ENCODE measurements at regions of chr15 and their contacts with region 1.

Region 1: DNA sequence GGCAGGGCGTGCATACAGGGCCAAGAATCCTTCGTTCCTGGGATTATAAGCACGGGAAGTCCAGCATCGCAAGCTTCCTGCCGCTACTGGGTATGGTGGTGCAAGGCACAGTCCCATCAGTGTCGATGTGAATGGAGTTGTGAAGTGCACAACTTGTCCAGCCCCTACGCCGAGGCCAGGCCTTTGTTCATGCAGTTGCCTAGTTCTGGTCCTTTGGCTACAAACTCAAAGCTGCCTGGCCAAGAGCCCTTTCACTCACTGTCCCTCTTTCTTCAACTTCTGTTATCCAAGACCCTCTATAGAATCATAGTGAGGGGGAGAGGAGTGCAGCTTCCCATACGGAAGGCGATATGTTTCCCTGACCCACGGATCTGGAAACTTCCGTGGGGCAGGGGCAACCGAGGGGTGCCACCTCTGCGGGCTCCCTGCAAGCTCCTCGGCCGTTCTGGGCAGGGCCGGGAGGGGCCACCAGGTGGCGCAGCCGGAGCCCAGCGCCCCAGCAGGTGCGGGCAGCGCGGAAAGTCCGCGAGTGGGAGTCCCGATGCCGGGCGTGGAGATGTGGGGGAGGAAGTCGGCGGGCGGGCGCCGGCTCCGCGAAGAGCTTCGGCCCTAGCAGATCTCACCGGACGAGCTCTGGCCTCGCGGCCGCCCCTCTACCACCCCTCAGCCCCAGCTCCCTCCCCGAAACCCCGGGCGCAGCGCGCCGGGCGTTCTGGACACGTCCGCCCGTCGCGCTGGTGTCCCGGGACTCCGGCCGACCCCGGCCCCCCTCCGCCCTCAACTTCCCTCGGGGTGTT is 693 bp downstream of the RASGRP1 start:
- DNase-seq: peak; percentile 91 to 93
- ATAC-seq: peak; percentile 79 to 90 (median 81)
- H3K4me3 ChIP-seq: peak overlapping the region; percentile 49
- H3K4me3 Mint-ChIP-seq: peak overlapping the region; percentile 94
- H3K27ac ChIP-seq: peak overlapping the region; percentile 88
- H3K27ac Mint-ChIP-seq: peak overlapping the region; percentile 81 to 94
- H3K4me1 ChIP-seq: peaks cover 43% of the 10 kb centered on the region
- H3K4me1 Mint-ChIP-seq: peaks cover 71 to 72% of the 10 kb centered on the region in 2 donors
- H3K27me3 ChIP-seq: no peaks in the 10 kb centered on the region
- H3K27me3 Mint-ChIP-seq: no peaks in the 10 kb centered on the region
- CTCF ChIP-seq: peak; percentile 96

Region 2: GRCh38 chr15:38362355-38362754 is 201.6 kb before region 1 on chr15:
- intact Hi-C with region 1: no loop called
- DNase-seq: no peak
- ATAC-seq: no peak
- H3K4me3 ChIP-seq: no peak overlapping the region
- H3K4me3 Mint-ChIP-seq: no peak overlapping the region
- H3K27ac ChIP-seq: no peak overlapping the region
- H3K27ac Mint-ChIP-seq: no peak overlapping the region
- H3K4me1 ChIP-seq: no peaks in the 10 kb centered on the region
- H3K4me1 Mint-ChIP-seq: no peaks in the 10 kb centered on the region
- H3K27me3 ChIP-seq: peaks cover 4% of the 10 kb centered on the region
- H3K27me3 Mint-ChIP-seq: peaks cover 21 to 40% of the 10 kb centered on the region in 2 donors
- CTCF ChIP-seq: no peak

Region 3: DNA sequence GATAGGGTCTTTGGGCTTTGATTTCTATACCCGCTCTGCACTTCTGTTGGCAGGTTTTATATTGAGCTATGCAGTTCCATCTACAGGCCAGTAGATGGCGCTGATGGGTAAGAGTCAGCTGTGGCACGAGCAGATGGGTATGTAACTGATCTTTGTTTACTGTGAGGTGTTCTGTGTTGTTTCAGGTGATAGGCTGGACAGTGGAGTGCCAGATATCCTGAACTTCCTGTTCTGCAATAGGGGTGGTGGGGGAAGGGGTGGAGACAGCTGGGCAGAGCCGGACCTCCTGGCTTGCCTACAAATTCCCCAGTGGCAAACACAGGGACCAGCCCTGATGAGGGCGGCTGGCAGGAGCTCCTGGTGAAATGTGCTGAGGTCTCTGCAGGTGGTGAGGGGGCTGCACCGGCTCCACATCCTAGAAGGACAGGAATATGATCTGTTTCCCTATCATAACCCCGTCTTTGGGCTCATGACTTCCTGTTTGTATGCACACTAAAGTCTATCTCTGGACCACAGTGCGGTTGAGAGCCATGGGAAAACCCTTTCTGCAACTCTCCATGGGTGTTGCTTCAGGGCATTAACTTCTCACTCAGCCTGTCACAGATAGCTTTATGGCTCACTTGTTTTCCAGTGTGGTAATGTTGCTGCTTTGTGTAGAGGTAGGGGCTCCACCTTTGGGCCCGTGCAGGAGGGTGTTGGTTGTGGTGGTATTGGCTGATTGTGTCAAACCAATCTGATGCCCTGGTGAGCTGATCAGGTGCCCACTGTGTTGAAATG is 123.4 kb before region 1 on chr15:
- intact Hi-C with region 1: loop called (anchors 10 kb)
- DNase-seq: peak; percentile 29 to 90
- ATAC-seq: peak; percentile 89 to 93 (median 92)
- H3K4me3 ChIP-seq: no peak overlapping the region
- H3K4me3 Mint-ChIP-seq: no peak overlapping the region
- H3K27ac ChIP-seq: no peak overlapping the region
- H3K27ac Mint-ChIP-seq: peak overlapping the region in 1 of 2 donors; percentile 60
- H3K4me1 ChIP-seq: peaks cover 6% of the 10 kb centered on the region
- H3K4me1 Mint-ChIP-seq: peaks cover 7 to 8% of the 10 kb centered on the region in 2 donors
- H3K27me3 ChIP-seq: peaks cover 4% of the 10 kb centered on the region
- H3K27me3 Mint-ChIP-seq: peaks cover 26 to 44% of the 10 kb centered on the region in 2 donors
- CTCF ChIP-seq: peak; percentile 94

Region 4: DNA sequence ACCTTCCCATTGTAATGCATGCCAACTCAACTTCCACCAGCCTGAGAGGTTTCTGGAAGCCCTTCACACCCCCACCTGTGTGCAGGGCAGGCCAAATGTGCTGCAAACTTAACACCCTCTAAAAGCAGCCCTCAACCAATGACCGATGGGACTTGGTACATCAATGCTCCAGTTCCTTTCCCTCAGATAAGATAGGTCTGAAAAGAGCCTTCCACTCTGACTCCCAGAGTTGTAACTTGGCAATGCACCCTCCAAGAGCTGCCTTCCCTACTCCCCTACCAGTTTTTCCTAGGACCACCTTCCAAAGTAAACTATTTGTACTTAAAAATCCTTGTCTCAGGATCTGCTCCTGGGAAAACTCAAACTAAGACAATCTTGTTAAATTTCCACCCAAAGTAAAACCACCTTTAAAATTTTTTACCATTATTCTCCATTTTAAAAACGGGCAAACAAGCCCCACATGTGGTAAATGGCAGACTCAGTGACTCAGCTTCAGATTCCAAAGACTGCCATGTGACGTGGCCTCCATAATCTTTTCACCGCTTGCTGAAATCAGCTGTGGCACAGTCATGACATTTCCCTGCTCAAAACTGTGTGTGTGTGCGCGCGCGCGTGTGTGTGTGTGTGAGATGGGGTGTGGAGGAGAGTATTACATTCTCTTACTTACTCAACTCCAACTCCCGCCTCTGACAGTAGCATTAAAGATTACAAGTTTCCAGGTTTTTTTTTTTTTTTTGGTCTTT is 16.5 kb before region 1 on chr15:
- intact Hi-C with region 1: loop called (anchors 2 kb)
- DNase-seq: no peak
- ATAC-seq: no peak
- H3K4me3 ChIP-seq: no peak overlapping the region
- H3K4me3 Mint-ChIP-seq: no peak overlapping the region
- H3K27ac ChIP-seq: no peak overlapping the region
- H3K27ac Mint-ChIP-seq: peak overlapping the region; percentile 34 to 66
- H3K4me1 ChIP-seq: peaks cover 3% of the 10 kb centered on the region
- H3K4me1 Mint-ChIP-seq: peaks cover 67 to 82% of the 10 kb centered on the region in 2 donors
- H3K27me3 ChIP-seq: no peaks in the 10 kb centered on the region
- H3K27me3 Mint-ChIP-seq: no peaks in the 10 kb centered on the region
- CTCF ChIP-seq: no peak

Region 5: DNA sequence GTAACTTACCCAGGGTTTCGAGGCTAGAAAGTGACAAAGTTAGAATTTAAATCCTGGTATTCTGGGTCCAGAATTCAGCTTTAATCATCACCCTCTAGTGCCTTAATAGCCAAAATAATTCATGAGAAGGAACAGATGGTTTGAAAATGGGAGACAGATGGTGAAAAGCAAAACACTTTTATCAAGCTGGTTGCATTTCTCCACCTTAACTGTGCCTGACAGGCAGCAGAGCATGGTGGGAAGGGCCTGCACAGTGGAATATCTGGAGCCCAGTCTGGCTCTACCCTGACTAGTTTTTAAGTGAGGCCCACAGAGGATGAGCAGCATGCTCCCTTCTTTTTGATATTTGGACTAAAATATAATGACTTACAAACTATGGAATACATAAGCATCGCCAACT is 36.3 kb after region 1 on chr15:
- intact Hi-C with region 1: no loop called
- DNase-seq: no peak
- ATAC-seq: no peak
- H3K4me3 ChIP-seq: no peak overlapping the region
- H3K4me3 Mint-ChIP-seq: no peak overlapping the region
- H3K27ac ChIP-seq: no peak overlapping the region
- H3K27ac Mint-ChIP-seq: no peak overlapping the region
- H3K4me1 ChIP-seq: no peaks in the 10 kb centered on the region
- H3K4me1 Mint-ChIP-seq: no peaks in the 10 kb centered on the region
- H3K27me3 ChIP-seq: no peaks in the 10 kb centered on the region
- H3K27me3 Mint-ChIP-seq: peaks cover 0 to 6% of the 10 kb centered on the region in 2 donors
- CTCF ChIP-seq: no peak

Region 6: DNA sequence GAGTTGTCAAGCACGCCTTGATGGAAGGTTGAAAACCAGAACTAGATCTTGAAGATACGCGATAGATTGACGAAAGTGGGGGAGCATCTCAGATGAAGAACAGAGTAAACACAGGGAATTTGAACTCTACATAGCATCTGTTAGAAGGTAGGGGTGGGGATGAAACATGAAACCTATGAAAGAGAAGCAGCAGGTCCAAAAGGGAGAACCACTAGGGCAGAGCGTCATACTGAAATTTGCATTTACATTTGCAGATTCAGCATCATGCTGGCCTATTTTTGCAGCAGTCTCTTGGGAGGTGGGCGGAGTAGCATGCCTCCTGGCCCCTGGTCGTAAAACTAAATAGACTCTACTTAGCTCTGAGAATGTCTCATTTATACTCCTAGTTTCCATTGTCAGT is 46.8 kb after region 1 on chr15:
- intact Hi-C with region 1: loop called (anchors 5 kb)
- DNase-seq: peak in 1 of 2 donors; percentile 64
- ATAC-seq: peak; percentile 56 to 69 (median 66)
- H3K4me3 ChIP-seq: no peak overlapping the region
- H3K4me3 Mint-ChIP-seq: peak overlapping the region; percentile 87
- H3K27ac ChIP-seq: peak overlapping the region; percentile 60
- H3K27ac Mint-ChIP-seq: peak overlapping the region; percentile 85 to 88
- H3K4me1 ChIP-seq: peaks cover 35% of the 10 kb centered on the region
- H3K4me1 Mint-ChIP-seq: peaks cover 64 to 67% of the 10 kb centered on the region in 2 donors
- H3K27me3 ChIP-seq: no peaks in the 10 kb centered on the region
- H3K27me3 Mint-ChIP-seq: no peaks in the 10 kb centered on the region
- CTCF ChIP-seq: no peak

Region 7: DNA sequence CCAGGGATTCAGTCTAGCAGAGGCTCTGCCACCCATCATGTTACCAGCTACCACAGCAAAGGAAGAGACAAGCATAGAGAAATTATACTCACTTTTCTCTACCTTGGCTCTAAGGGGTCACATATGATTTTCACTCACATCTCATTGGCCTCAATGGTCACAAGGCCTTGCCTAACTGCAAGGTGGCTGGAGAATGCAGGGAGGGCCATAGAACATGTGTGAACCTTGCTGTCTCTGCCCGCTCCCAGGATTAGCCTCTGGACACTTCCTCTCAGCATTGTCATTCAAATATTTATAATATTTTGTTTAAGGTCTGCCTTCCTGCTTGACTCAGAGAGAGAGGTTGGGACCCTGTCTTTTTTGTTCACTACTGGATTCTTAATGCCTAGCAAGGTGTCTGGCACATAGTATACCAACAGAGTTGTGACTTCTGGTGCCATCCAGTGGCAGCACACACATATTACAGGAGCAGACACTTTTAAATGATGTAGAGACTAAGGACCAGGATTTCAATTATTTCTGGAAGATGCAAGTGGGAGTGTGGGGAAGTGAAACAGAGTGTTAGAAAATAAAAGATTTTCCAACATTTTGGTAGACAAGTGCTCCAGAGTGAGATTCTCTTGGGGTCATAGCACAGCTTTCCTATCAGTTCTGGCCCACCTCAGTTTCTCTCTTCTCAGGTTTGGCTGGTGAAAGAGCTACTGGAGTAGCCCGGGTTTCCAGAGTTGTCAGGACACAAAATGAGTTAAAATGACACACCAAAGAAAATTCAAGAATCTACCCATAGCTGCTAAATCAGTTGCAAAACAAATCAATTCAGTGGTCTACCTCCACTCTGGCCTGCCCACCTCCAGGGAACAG is 119.7 kb after region 1 on chr15:
- intact Hi-C with region 1: loop called (anchors 1 kb)
- DNase-seq: peak; percentile 58 to 90
- ATAC-seq: peak; percentile 89 to 98 (median 97)
- H3K4me3 ChIP-seq: no peak overlapping the region
- H3K4me3 Mint-ChIP-seq: peak overlapping the region; percentile 7
- H3K27ac ChIP-seq: no peak overlapping the region
- H3K27ac Mint-ChIP-seq: peak overlapping the region; percentile 41 to 80
- H3K4me1 ChIP-seq: peaks cover 46% of the 10 kb centered on the region
- H3K4me1 Mint-ChIP-seq: peaks cover 41 to 43% of the 10 kb centered on the region in 2 donors
- H3K27me3 ChIP-seq: no peaks in the 10 kb centered on the region
- H3K27me3 Mint-ChIP-seq: no peaks in the 10 kb centered on the region
- CTCF ChIP-seq: peak; percentile 90